K562 (cell line): ENCODE measurements at regions of chr11 and their contacts with region 1.

Region 1: DNA sequence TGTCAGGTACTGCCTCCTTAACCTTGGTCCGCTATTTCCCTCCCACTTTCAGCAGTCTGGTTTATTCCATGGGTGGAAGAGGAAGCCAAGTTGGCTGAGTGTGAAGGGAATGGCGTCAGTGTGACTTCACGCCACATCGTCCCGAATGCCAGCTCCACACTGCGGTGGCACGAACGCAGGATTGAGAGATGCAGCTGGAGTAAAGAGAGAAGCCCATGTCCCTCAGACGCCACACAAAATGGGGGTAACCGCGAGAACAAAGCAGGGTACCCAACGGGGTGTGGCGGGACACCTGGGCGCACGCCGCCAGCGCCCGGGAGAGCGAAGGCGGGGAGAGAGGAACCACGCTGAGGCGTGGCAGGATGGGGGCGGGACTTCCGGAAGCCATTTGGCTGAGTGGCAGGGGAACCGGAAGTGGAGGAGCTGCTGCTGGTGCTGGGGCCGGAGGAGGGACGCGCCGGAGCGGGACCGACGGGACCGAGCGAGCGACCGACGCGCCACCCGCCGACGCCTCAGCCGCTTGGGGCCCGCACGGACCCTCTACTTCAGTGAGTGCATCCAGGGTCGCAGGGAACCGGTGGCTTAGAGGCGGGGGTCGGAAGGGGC is at the start of gene PAFAH1B2:
- DNase-seq: peak; percentile 97 to 99 (median 97)
- ATAC-seq: peak; percentile 95
- H3K4me3 ChIP-seq: peak within 1 kb of the TSS; percentile 89
- H3K27ac ChIP-seq: peak within 1 kb of the TSS; percentile 88
- H3K4me1 ChIP-seq: peaks cover 12 to 18% of the 10 kb centered on the region in 2 experiments; a peak in 4 of 5 replicates
- H3K27me3 ChIP-seq: no peaks in the 10 kb centered on the region
- CTCF ChIP-seq: no peak
- EP300 ChIP-seq: no peak
- POLR2A ChIP-seq: peak; percentile 95
- RAD21 ChIP-seq: no peak
- polyA plus RNA-seq, gene PAFAH1B2: 27.8 to 81.6 TPM

Region 2: GRCh38 chr11:117171404-117172061 is 27.6 kb after region 1 on chr11:
- CTCF ChIA-PET with region 1: no interaction called
- POLR2A ChIA-PET with region 1: interaction called, 18 read pairs
- in situ Hi-C with region 1: no loop called
- intact Hi-C with region 1: no loop called
- DNase-seq: peak; percentile 57 to 82 (median 65)
- ATAC-seq: peak; percentile 81
- H3K4me3 ChIP-seq: no peak overlapping the region
- H3K27ac ChIP-seq: peak overlapping the region; percentile 69; the same call in 2 of the 3 replicates
- H3K4me1 ChIP-seq: peaks cover 26 to 34% of the 10 kb centered on the region in 2 experiments
- H3K27me3 ChIP-seq: no peaks in the 10 kb centered on the region
- CTCF ChIP-seq: no peak
- EP300 ChIP-seq: peak; percentile 67; the same call in 1 of the 2 replicates
- POLR2A ChIP-seq: peak; percentile 65; the same call in 1 of the 2 replicates
- RAD21 ChIP-seq: no peak

Region 3: GRCh38 chr11:117178210-117179034 is 34.4 kb after region 1 on chr11 and contains the start of gene SIDT2:
- CTCF ChIA-PET with region 1: no interaction called
- POLR2A ChIA-PET with region 1: interaction called, 18 read pairs
- in situ Hi-C with region 1: no loop called
- intact Hi-C with region 1: loop called (anchors 2 kb)
- DNase-seq: peak; percentile 86 to 95 (median 88)
- ATAC-seq: peak; percentile 94
- H3K4me3 ChIP-seq: peak within 1 kb of the TSS; percentile 49
- H3K27ac ChIP-seq: peak within 1 kb of the TSS; percentile 70
- H3K4me1 ChIP-seq: peaks cover 30 to 46% of the 10 kb centered on the region in 2 experiments
- H3K27me3 ChIP-seq: no peaks in the 10 kb centered on the region
- CTCF ChIP-seq: peak in 1 of 3 experiments; percentile 7; a peak in 1 of 6 replicates
- EP300 ChIP-seq: no peak
- POLR2A ChIP-seq: peak; percentile 62
- RAD21 ChIP-seq: no peak
- polyA plus RNA-seq, gene SIDT2: 2.4 to 3.6 TPM

Region 4: GRCh38 chr11:117205211-117205818 is 61.3 kb after region 1 on chr11:
- CTCF ChIA-PET with region 1: no interaction called
- POLR2A ChIA-PET with region 1: no interaction called
- in situ Hi-C with region 1: loop called (anchors 5 kb)
- intact Hi-C with region 1: no loop called
- DNase-seq: no peak
- ATAC-seq: peak; percentile 57
- H3K4me3 ChIP-seq: no peak overlapping the region
- H3K27ac ChIP-seq: no peak overlapping the region
- H3K4me1 ChIP-seq: peaks cover 0 to 8% of the 10 kb centered on the region in 2 experiments; a peak in 3 of 5 replicates
- H3K27me3 ChIP-seq: no peaks in the 10 kb centered on the region
- CTCF ChIP-seq: peak in 1 of 3 experiments; percentile 18; a peak in 1 of 6 replicates
- EP300 ChIP-seq: no peak
- POLR2A ChIP-seq: no peak
- RAD21 ChIP-seq: no peak